CD14-positive monocyte (primary cell): ENCODE measurements at regions of chr1 and their contacts with region 1.

Region 1: DNA sequence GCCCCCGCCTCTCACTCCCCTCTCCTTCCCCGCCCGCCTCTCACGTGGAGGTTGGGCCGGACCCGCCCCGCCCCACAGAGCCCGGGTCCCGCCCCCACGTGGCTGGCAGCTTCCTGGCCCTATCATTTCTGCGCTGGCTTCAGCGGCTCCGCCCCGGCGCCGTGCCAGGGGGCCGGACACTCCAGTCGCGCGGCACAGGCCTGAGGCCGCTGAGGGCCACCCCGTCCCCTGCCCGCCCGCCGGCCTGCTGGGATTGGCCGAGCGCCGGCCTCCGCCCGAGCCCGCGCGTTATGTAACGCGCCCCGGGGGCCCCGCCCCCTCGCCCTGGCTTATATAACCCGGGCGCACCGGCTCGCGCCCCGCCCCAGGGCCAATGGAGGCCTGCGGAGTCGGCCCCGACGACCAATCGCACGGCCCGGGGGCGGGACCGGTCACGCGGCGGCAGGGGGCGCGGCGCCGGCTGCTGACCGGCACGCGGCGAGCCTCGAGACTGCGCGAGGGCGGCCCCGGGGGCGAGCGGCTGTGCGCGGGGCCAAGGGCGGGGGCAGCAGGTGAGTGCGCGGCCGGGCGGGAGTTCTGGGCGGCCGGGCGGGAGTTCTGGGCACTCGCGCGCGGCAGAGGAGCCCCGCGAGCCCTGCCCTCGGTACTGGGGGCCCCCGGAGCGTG is at the start of gene PER3:
- DNase-seq: peak; percentile 97 to 98 (median 97)
- H3K4me3 ChIP-seq: peak within 1 kb of the TSS; percentile 29 to 72 (median 42)
- H3K4me3 Mint-ChIP-seq: peak within 1 kb of the TSS; percentile 81 to 82
- H3K27ac ChIP-seq: peak within 1 kb of the TSS; percentile 57 to 69
- H3K27ac Mint-ChIP-seq: peak within 1 kb of the TSS; percentile 75 to 93 (median 85)
- H3K4me1 ChIP-seq: peaks cover 41 to 53% of the 10 kb centered on the region in 2 donors
- H3K4me1 Mint-ChIP-seq: peaks cover 47% of the 10 kb centered on the region
- H3K27me3 ChIP-seq: no peaks in the 10 kb centered on the region
- H3K27me3 Mint-ChIP-seq: peaks cover 0 to 6% (median 0%) of the 10 kb centered on the region in 3 donors
- CTCF ChIP-seq: no peak
- polyA plus RNA-seq, gene PER3: 0.46 to 2.3 (median 2.0) TPM

Region 2: DNA sequence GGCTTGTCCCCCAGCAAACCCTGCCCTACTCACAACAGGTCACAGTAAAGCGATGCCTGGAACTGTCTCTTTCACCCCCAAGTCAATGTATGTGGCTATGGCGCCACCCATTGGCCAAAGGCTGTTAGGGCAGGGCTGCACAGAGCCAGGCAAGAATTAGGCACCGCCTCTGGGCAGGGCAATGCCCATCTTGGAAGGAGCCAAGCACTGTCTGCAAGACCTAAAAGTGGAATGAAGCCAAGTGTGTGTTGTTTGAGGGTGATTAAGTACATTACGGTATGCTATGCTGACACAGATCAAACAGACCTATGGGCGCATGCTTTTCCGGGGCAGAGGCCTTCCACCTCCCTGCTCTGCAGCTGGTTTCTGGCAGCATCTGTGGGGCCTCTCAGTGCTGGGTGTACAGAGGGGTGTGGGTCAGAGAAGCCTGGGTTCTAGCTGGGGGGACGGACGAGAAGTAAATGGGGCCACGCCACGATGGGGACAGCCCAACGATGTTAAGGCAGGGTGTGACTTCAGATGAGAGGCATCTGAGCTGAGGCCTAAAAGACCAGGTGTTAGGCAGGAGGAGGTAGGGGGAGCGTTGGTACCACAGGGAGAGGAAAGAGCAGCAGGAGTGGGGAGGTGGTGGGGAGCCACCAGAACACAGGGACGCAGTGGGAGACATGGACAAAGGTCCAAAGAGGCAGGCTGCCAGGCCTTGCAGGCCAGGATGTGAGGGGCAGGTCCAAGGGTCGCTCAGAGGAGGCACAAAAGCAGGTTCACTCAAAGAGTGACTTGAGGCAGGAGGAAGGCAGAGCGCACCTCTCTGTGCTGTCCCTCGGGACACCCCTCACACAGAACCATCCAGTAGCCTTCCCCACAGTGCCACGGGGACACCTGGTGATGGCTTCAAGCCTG is 1440.2 kb before region 1 on chr1:
- intact Hi-C with region 1: no loop called
- DNase-seq: peak in 2 of 3 donors; percentile 8 to 18
- H3K4me3 ChIP-seq: no peak overlapping the region
- H3K4me3 Mint-ChIP-seq: no peak overlapping the region
- H3K27ac ChIP-seq: no peak overlapping the region
- H3K27ac Mint-ChIP-seq: no peak overlapping the region
- H3K4me1 ChIP-seq: peaks cover 4 to 10% of the 10 kb centered on the region in 2 donors
- H3K4me1 Mint-ChIP-seq: peaks cover 13% of the 10 kb centered on the region
- H3K27me3 ChIP-seq: no peaks in the 10 kb centered on the region
- H3K27me3 Mint-ChIP-seq: peaks cover 1 to 7% (median 2%) of the 10 kb centered on the region in 3 donors
- CTCF ChIP-seq: peak; percentile 67

Region 3: GRCh38 chr1:7704214-7705047 is 79.5 kb before region 1 on chr1:
- intact Hi-C with region 1: loop called in 1 of 2 experiments (anchors 5 kb)
- DNase-seq: peak; percentile 89 to 93 (median 89)
- H3K4me3 ChIP-seq: peak overlapping the region in 2 of 3 experiments; percentile 3 to 62
- H3K4me3 Mint-ChIP-seq: peak overlapping the region; percentile 79 to 85
- H3K27ac ChIP-seq: no peak overlapping the region
- H3K27ac Mint-ChIP-seq: no peak overlapping the region
- H3K4me1 ChIP-seq: peaks cover 8 to 9% of the 10 kb centered on the region in 2 donors
- H3K4me1 Mint-ChIP-seq: peaks cover 8% of the 10 kb centered on the region
- H3K27me3 ChIP-seq: peaks cover 46 to 70% of the 10 kb centered on the region in 2 donors
- H3K27me3 Mint-ChIP-seq: peaks cover 64 to 77% (median 69%) of the 10 kb centered on the region in 3 donors
- CTCF ChIP-seq: no peak

Region 4: GRCh38 chr1:7770997-7771822 is 12.7 kb before region 1 on chr1 and contains the start of gene VAMP3:
- intact Hi-C with region 1: loop called (anchors 1 to 2 kb)
- DNase-seq: peak; percentile 73 to 90 (median 85)
- H3K4me3 ChIP-seq: peak within 1 kb of the TSS; percentile 72 to 94 (median 91)
- H3K4me3 Mint-ChIP-seq: peak within 1 kb of the TSS; percentile 88 to 92
- H3K27ac ChIP-seq: peak within 1 kb of the TSS; percentile 94 to 99
- H3K27ac Mint-ChIP-seq: peak within 1 kb of the TSS; percentile 98 to 100 (median 99)
- H3K4me1 ChIP-seq: peaks cover 39 to 47% of the 10 kb centered on the region in 2 donors
- H3K4me1 Mint-ChIP-seq: peaks cover 51% of the 10 kb centered on the region
- H3K27me3 ChIP-seq: no peaks in the 10 kb centered on the region
- H3K27me3 Mint-ChIP-seq: no peaks in the 10 kb centered on the region
- CTCF ChIP-seq: no peak
- polyA plus RNA-seq, gene VAMP3: 106 to 149 (median 138) TPM

Region 5: GRCh38 chr1:7847599-7847998 is 63.6 kb after region 1 on chr1:
- intact Hi-C with region 1: no loop called
- DNase-seq: no peak
- H3K4me3 ChIP-seq: no peak overlapping the region
- H3K4me3 Mint-ChIP-seq: no peak overlapping the region
- H3K27ac ChIP-seq: no peak overlapping the region
- H3K27ac Mint-ChIP-seq: no peak overlapping the region
- H3K4me1 ChIP-seq: no peaks in the 10 kb centered on the region
- H3K4me1 Mint-ChIP-seq: no peaks in the 10 kb centered on the region
- H3K27me3 ChIP-seq: no peaks in the 10 kb centered on the region
- H3K27me3 Mint-ChIP-seq: peaks cover 0 to 4% (median 3%) of the 10 kb centered on the region in 3 donors
- CTCF ChIP-seq: no peak

Region 6: DNA sequence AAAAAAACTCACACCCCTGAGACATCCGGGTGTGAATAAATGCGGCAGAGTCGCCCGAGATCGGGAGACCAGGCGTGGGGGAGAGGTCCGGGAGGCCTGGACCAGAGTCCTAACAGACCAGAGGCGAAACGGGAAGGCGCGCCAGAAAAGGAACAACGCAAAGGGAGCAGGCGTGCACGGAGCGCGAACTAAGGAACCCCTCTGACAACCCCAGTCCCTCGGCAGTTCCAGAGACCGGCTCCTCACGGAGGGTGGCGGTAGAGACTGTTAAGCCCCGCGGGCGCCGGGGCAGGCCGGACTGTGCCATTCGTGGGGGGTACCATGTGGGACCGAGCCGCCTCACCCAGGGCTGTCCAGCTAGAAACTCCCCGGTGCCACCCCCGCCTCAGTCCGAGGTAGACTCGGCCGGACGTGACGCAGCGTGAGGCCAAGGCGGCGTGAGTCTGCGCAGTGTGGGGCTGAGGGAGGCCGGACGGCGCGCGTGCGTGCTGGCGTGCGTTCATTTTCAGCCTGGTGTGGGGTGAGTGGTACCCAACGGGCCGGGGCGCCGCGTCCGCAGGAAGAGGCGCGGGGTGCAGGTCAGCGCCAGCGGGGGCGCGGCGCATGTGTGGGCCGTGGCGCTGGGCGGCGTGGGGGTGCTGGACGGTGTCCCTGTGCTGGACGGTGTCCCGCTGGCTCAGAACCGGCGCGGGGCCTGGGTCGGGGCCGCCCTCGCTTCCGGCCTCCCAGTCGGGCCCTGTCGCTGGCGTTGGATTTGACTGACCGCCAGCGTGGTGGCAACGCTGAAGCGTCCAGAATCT is 177.5 kb after region 1 on chr1 and contains the start of gene PARK7:
- intact Hi-C with region 1: loop called (anchors 5 to 10 kb)
- DNase-seq: peak; percentile 99 to 100 (median 99)
- H3K4me3 ChIP-seq: peak within 1 kb of the TSS; percentile 54 to 93 (median 76)
- H3K4me3 Mint-ChIP-seq: peak within 1 kb of the TSS; percentile 96 to 99
- H3K27ac ChIP-seq: peak within 1 kb of the TSS; percentile 88 to 96
- H3K27ac Mint-ChIP-seq: peak within 1 kb of the TSS; percentile 95 to 99 (median 98)
- H3K4me1 ChIP-seq: peaks cover 25 to 29% of the 10 kb centered on the region in 2 donors
- H3K4me1 Mint-ChIP-seq: peaks cover 22% of the 10 kb centered on the region
- H3K27me3 ChIP-seq: no peaks in the 10 kb centered on the region
- H3K27me3 Mint-ChIP-seq: peaks cover 0 to 3% (median 0%) of the 10 kb centered on the region in 3 donors
- CTCF ChIP-seq: peak; percentile 44
- polyA plus RNA-seq, gene PARK7: 116 to 391 (median 353) TPM

Region 7: GRCh38 chr1:8396786-8397406 is 612.9 kb after region 1 on chr1:
- intact Hi-C with region 1: no loop called
- DNase-seq: peak in 2 of 3 donors; percentile 13
- H3K4me3 ChIP-seq: no peak overlapping the region
- H3K4me3 Mint-ChIP-seq: no peak overlapping the region
- H3K27ac ChIP-seq: peak overlapping the region in 1 of 2 donors; percentile 78
- H3K27ac Mint-ChIP-seq: peak overlapping the region in 4 of 7 donors; percentile 11 to 66 (median 56)
- H3K4me1 ChIP-seq: peaks cover 42 to 43% of the 10 kb centered on the region in 2 donors
- H3K4me1 Mint-ChIP-seq: peaks cover 52% of the 10 kb centered on the region
- H3K27me3 ChIP-seq: no peaks in the 10 kb centered on the region
- H3K27me3 Mint-ChIP-seq: no peaks in the 10 kb centered on the region
- CTCF ChIP-seq: no peak